WTC11 (cell line): ENCODE measurements at regions of chr3 and their contacts with region 1.

Region 1: GRCh38 chr3:126995926-126996512 is 13.1 kb downstream of the PLXNA1 start:
- DNase-seq: no peak
- ATAC-seq: no peak
- H3K4me3 Mint-ChIP-seq: no peak overlapping the region
- H3K27ac Mint-ChIP-seq: no peak overlapping the region
- H3K4me1 Mint-ChIP-seq: peaks cover 12% of the 10 kb centered on the region
- H3K27me3 Mint-ChIP-seq: no peaks in the 10 kb centered on the region
- CTCF ChIP-seq: no peak

Region 2: DNA sequence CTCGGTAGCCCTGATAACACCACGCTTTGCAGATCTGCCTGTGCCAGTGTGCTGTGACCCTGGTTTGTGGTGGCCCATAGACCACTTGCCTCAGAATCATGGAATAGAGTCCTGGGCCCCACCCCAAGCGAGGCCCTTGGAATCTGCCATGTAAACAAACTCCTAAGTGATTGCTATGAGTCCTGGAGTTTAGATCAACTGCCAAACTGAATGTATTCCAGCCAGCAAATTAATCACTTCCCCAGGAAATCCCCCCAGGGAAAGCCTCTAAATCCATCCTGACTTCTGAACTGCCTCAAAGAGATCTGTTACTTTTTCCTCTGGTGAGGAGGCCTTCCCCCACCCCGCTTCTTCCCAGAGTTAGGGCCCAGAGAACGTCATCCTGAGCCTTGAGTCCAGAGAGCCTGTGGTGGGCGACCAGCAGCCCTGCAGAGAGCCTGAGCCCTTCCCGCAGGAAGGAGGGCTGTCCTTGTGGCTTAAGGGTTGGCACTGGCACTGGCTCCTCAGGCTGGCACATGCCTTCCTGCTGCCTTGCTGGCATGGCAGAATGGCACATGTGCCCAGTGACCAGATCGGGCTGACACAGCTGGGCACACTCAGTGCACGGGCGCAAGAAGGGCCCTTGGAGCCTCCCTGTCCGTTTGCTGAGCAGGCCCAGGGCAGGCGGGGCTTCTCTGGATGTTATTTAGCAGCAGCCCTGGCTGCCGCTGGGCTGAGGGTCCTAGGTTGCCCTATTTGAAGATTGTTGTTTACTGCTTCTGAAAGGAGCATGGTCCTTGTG is 63.6 kb before region 1 on chr3:
- CTCF ChIA-PET with region 1: no interaction called
- POLR2A ChIA-PET with region 1: no interaction called
- DNase-seq: no peak
- ATAC-seq: no peak
- H3K4me3 Mint-ChIP-seq: no peak overlapping the region
- H3K27ac Mint-ChIP-seq: no peak overlapping the region
- H3K4me1 Mint-ChIP-seq: peaks cover 4% of the 10 kb centered on the region; the same call in 1 of the 2 replicates
- H3K27me3 Mint-ChIP-seq: no peaks in the 10 kb centered on the region
- CTCF ChIP-seq: no peak

Region 3: GRCh38 chr3:126982471-126983175 is 13.4 kb before region 1 on chr3 and contains the start of gene PLXNA1:
- CTCF ChIA-PET with region 1: interaction called, 12 read pairs
- POLR2A ChIA-PET with region 1: no interaction called
- DNase-seq: peak; percentile 79
- ATAC-seq: peak; percentile 56
- H3K4me3 Mint-ChIP-seq: peak within 1 kb of the TSS; percentile 73
- H3K27ac Mint-ChIP-seq: no peak within 1 kb of the TSS
- H3K4me1 Mint-ChIP-seq: peaks cover 9% of the 10 kb centered on the region
- H3K27me3 Mint-ChIP-seq: peaks cover 21% of the 10 kb centered on the region
- CTCF ChIP-seq: peak; percentile 94
- total RNA-seq, gene PLXNA1: 53.0 to 55.0 TPM (median 53.8 TPM) in 3 replicates